Activated CD4-positive, alpha-beta T cell treated with anti-CD3 and anti-CD28 coated beads for 36 hours (primary cell): ENCODE measurements at regions of chr12 and their contacts with region 1.

Region 1: DNA sequence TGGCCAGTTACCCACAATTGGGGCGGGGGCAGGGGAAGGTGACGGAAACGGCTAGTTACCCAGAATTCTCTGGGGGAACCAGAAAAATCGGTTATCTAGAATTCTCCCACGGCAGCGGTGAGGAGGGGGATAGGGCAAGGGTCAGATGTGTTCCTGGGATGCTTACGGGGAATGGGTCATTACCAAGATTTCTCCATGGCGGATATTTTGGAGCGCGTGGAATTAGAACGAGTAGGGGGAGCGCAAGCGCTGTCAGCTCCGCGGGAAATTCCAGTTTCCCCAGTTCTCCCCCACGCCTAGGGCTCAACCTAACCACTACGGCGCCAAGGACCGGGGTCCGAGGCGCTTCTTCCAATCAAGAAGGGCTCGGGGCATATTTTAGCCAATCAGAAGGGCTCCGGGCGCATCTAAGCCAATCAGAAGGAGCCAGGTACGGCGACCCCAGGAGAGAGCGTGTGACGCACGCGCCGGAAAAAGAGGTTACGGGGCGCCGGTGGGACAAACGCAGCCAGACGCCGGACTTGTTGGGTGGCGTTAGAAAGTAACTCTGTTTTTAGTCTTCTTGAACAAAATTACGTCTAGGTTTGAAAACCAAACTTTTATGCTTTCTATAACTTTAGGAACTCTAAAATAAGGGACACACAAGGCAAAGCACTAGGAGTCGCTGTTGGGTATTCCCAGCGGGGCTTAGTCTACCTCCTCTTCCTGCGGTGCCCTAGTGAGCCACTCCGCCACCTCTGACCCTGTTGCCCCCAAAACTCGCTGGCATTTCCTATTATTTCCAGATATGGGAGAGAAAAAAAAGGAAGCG is at the start of gene PAN2:
- DNase-seq: peak; percentile 96
- ATAC-seq: peak; percentile 88
- H3K4me3 Mint-ChIP-seq: peak within 1 kb of the TSS; percentile 83
- H3K27ac Mint-ChIP-seq: peak within 1 kb of the TSS; percentile 99
- H3K4me1 Mint-ChIP-seq: peaks cover 37% of the 10 kb centered on the region
- H3K27me3 Mint-ChIP-seq: no peaks in the 10 kb centered on the region
- total RNA-seq, gene PAN2: 54.6 to 62.5 TPM

Region 2: GRCh38 chr12:56258057-56258819 is 75.6 kb before region 1 on chr12 and contains the start of gene ANKRD52:
- CTCF ChIA-PET with region 1: interaction called, 4 read pairs
- POLR2A ChIA-PET with region 1: no interaction called
- intact Hi-C with region 1: loop called in 1 of 2 experiments (anchors 1 kb)
- DNase-seq: peak; percentile 90
- ATAC-seq: peak; percentile 92
- H3K4me3 Mint-ChIP-seq: peak within 1 kb of the TSS; percentile 83
- H3K27ac Mint-ChIP-seq: peak within 1 kb of the TSS; percentile 72
- H3K4me1 Mint-ChIP-seq: peaks cover 16% of the 10 kb centered on the region
- H3K27me3 Mint-ChIP-seq: no peaks in the 10 kb centered on the region
- total RNA-seq, gene ANKRD52: 29.2 to 31.0 TPM

Region 3: DNA sequence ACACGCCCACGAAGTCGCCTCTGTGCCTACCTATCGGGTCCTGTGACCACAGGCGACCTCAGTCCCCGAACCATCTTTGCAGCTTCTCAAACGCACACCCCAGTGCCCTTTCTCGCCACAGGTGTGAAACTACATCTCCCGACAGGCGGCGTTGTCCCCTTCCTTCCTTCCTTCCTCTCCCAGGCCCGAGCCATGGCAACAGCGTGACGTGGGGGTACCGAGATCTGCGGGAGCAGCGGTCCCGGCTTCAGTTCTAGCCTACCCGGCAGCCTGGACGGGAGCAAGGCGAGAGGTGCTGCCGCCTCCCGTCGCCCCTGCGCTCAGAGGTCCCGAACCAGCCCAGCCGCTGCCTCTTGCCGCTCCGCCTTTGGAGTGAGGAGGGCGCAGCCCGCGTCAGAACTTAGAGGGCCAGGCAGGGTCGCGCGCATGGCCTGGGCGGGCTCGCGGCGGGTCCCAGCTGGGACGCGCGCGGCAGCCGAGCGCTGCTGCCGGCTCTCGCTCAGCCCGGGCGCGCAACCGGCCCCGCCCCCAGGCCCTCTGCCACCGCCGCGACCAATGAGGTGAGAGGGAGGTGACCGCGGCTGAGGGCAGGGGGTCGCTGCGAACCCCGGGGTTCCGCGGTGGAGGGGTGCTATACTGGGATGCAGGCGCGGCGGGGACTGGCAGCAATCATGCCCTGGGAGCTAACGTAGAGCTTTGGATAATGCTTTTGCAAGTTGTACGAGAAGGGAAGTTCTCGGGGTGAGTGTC is 67.0 kb before region 1 on chr12 and contains the start of gene COQ10A:
- CTCF ChIA-PET with region 1: interaction called, 4 read pairs
- POLR2A ChIA-PET with region 1: interaction called, 7 read pairs
- intact Hi-C with region 1: loop called in 1 of 2 experiments (anchors 2 kb)
- DNase-seq: peak; percentile 90
- ATAC-seq: peak; percentile 90
- H3K4me3 Mint-ChIP-seq: peak within 1 kb of the TSS; percentile 89
- H3K27ac Mint-ChIP-seq: peak within 1 kb of the TSS; percentile 89
- H3K4me1 Mint-ChIP-seq: peaks cover 9% of the 10 kb centered on the region
- H3K27me3 Mint-ChIP-seq: no peaks in the 10 kb centered on the region
- total RNA-seq, gene COQ10A: 5.2 to 7.5 TPM

Region 4: GRCh38 chr12:56299853-56300643 is 33.8 kb before region 1 on chr12 and contains the start of gene CS:
- CTCF ChIA-PET with region 1: interaction called, 4 read pairs
- POLR2A ChIA-PET with region 1: interaction called, 3 read pairs
- intact Hi-C with region 1: loop called (anchors 1 kb)
- DNase-seq: peak; percentile 99
- ATAC-seq: peak; percentile 98
- H3K4me3 Mint-ChIP-seq: peak within 1 kb of the TSS; percentile 96
- H3K27ac Mint-ChIP-seq: peak within 1 kb of the TSS; percentile 91
- H3K4me1 Mint-ChIP-seq: peaks cover 49% of the 10 kb centered on the region
- H3K27me3 Mint-ChIP-seq: no peaks in the 10 kb centered on the region
- total RNA-seq, gene CS: 197 to 293 TPM

Region 5: DNA sequence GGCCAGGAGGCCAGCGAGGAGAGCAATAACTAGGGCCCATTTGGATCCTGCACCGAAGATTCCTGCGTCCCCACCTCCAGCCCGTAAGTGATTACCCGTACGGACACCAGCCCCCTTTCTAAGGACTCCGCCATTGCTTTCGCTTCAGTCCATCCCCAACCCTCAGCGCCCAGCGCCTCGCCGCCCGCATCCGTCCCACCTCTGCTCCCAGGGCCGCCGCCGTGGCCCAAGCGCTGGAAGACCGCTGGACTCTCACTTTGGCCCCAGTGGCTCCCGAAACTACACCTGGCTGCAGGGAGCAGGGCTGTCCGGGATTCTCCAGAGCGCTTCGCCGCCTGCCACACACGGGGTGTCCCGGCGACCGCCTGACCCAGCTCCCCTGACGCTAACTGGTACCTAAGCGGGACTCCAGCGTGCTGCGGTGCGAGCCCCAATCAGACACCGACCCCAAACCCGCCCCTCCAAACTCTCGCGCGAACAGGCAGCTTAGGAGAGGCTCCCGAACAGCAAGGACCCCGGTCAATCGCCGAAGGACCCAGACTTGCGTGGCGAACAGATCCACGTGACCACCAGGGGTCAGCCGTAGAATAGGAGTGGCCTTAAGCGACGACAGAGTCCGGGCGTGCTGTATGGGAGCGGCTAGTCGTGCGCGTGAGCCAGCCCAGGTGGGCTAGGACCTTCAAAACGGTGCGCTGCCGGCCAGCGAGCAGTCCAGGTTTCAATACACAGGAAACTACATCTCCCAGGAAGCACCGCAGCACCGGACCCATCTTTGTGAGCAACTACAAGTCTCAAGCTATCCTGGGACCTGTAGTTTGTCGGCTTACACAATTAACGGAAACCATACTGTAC is 18.0 kb before region 1 on chr12 and contains the start of gene CNPY2:
- CTCF ChIA-PET with region 1: interaction called, 16 read pairs
- POLR2A ChIA-PET with region 1: interaction called, 16 read pairs
- intact Hi-C with region 1: loop called (anchors 1 to 2 kb)
- DNase-seq: peak; percentile 95
- ATAC-seq: peak; percentile 93
- H3K4me3 Mint-ChIP-seq: peak within 1 kb of the TSS; percentile 97
- H3K27ac Mint-ChIP-seq: peak within 1 kb of the TSS; percentile 95
- H3K4me1 Mint-ChIP-seq: peaks cover 18% of the 10 kb centered on the region
- H3K27me3 Mint-ChIP-seq: no peaks in the 10 kb centered on the region
- total RNA-seq, gene CNPY2: 77.4 to 82.6 TPM

Region 6: DNA sequence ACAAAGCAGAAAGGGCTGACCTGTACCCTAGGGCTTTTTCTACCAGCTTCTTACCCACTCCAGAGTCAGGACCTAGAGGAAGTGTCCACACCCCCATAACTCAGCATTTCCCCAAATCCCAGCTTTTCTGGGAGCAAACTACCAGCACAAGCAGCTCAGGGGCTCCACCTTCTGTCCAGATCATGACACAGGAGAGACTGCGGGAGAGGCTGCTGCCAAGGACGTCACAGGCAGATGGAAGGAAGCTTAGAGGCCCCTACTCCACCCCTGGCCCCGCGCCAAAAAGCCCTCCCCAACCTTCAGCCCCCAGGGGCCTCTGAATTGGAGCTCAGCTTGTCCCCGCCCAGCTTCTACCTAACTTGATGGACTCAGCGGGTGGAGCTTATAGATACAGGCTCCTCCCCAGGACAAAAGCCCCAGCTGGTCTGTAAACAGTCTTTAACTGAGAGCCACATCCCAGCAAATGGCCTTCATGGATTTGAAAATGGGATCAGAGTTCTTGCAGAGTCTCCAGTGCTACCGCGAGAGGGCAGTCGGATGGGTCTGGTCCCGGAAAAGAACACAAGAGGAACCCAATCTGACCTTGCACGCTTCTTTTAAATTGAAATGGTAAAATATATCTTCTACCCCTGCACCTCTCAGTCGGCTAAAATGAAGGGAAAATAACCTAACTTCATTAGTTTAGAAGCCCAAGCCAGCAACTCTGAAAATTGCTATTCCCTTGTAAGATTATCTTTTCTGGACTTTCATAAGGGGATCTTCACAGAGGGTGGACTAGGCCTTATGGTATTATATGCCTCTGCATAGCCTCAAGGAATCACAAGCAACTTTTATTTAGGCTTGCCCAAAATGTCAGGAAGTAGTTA is 303.0 kb after region 1 on chr12:
- CTCF ChIA-PET with region 1: interaction called, 4 read pairs
- POLR2A ChIA-PET with region 1: no interaction called
- intact Hi-C with region 1: loop called in 1 of 2 experiments (anchors 5 kb)
- DNase-seq: peak; percentile 98
- ATAC-seq: peak; percentile 73
- H3K4me3 Mint-ChIP-seq: peak overlapping the region; percentile 87
- H3K27ac Mint-ChIP-seq: peak overlapping the region; percentile 92
- H3K4me1 Mint-ChIP-seq: peaks cover 60% of the 10 kb centered on the region
- H3K27me3 Mint-ChIP-seq: no peaks in the 10 kb centered on the region

Region 7: GRCh38 chr12:56661560-56661959 is 327.7 kb after region 1 on chr12:
- CTCF ChIA-PET with region 1: no interaction called
- POLR2A ChIA-PET with region 1: no interaction called
- intact Hi-C with region 1: no loop called
- DNase-seq: no peak
- ATAC-seq: no peak
- H3K4me3 Mint-ChIP-seq: no peak overlapping the region
- H3K27ac Mint-ChIP-seq: no peak overlapping the region
- H3K4me1 Mint-ChIP-seq: peaks cover 20% of the 10 kb centered on the region
- H3K27me3 Mint-ChIP-seq: no peaks in the 10 kb centered on the region

Region 8: DNA sequence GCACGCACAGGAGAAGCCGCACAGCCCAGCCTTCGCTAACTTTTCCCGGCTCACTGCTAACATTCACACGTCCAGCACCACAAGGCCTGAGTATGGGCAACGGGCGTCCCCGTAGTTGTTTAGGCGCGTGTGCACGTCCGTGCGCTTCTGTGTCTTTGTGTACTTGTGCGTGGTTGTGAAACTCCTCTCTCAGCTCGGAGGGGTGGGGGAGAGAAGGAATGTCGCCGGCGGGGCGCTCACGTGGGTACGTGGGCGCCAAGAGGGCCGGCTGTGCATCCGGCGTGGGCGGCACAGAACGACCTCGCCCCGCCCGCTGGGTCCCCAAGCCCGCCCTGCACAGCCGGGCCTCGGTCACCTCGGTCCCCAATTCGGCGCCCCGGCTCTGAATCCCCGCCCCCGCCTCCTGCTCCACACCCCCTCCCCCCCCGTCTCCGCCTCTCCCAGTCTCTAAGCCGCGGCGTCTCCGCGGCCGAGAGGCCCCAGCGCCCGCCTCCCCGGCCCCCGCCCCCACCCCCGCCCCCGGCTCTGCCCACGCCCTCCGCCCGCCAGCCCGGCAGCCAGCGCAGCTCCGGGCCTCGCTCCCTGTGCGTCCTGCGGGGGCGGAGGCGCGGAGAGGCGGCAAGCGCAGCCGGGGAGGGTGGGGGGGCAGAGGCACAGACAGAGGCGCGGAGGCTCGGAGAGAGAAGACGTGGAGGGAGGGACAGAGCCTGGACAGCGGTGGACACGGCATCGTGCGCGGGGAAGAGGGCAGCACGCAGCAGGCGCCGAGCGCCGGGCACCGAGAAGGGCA is 754.8 kb after region 1 on chr12 and contains the start of gene NAB2:
- CTCF ChIA-PET with region 1: no interaction called
- POLR2A ChIA-PET with region 1: no interaction called
- intact Hi-C with region 1: loop called in 1 of 2 experiments (anchors 10 kb)
- DNase-seq: peak; percentile 95
- ATAC-seq: peak; percentile 49
- H3K4me3 Mint-ChIP-seq: peak within 1 kb of the TSS; percentile 93
- H3K27ac Mint-ChIP-seq: peak within 1 kb of the TSS; percentile 95
- H3K4me1 Mint-ChIP-seq: peaks cover 63% of the 10 kb centered on the region
- H3K27me3 Mint-ChIP-seq: no peaks in the 10 kb centered on the region
- total RNA-seq, gene NAB2: 46.8 to 48.6 TPM